ENCODE measurements at regions of chrX and their contacts with region 1.

Region 1: DNA sequence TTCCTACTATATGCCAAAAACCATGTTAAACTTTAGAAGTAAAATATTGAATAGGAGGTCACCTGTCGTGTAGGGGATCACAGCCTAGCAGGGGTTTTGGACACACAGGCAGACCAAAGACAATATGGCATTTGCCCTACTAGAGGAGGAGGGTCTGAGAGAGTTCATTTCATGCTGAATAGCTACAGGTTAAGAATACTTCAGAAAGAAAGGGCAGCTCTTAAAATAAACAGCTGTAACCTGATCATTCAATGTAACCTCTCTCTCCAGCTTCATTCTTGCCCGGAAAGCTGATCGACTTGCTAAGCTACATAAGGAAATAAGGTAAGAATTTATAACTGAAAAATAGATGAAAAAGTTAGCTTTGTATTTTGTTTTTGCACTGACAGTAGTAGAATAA is 79.9 kb downstream of the MAOA start:
- DNase-seq: no peak
- ATAC-seq: no peak
- H3K4me3 ChIP-seq: peak overlapping the region in 1 of 12 donors; percentile 7
- H3K27ac ChIP-seq: no peak overlapping the region
- H3K4me1 ChIP-seq: peaks cover 0 to 4% (median 0%) of the 10 kb centered on the region in 12 donors
- H3K27me3 ChIP-seq: peaks cover 0 to 21% (median 0%) of the 10 kb centered on the region in 9 donors
- CTCF ChIP-seq: no peak
- POLR2A ChIP-seq: no peak

Region 2: DNA sequence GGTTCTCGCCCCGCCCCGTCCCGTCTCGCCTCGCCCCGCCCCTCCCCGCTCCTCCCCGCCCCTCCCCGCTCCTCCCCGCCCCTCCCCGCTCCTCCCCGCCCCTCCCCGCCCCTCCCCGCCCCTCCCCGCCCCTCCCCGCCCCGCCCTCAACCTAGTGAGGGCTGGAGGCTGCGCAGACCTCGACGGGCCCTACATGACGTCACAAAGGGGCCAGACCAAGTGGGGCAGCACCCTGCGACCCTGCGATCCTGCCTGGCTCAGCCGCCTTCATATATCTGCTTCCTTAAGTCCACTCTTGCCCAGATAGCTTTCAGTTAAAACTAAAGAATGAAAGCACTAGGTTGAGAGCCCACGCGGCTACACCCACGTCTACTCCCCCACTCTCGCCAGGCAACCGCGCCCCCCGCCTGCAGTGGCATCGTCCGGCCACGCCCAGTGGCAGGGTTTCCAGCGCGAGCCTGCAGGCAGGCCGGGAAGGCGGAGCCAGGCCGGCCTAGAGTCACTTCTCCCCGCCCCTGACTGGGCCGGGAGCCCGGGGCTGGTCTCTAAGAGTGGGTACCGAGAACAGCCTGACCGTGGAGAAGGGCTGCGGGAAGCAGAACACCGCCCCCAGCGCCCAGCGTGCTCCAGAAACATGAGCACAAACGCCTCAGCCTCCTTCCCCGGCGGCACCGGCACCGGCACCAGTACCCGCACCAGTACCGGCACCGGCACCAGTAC is 81.4 kb before region 1 on chrX:
- intact Hi-C with region 1: loop called in 5 of 10 experiments (anchors 2 to 10 kb)
- DNase-seq: peak; percentile 91 to 95 (median 94)
- ATAC-seq: peak; percentile 94 to 98 (median 97)
- H3K4me3 ChIP-seq: peak overlapping the region; percentile 43 to 98 (median 76)
- H3K27ac ChIP-seq: peak overlapping the region; percentile 81 to 95 (median 88)
- H3K4me1 ChIP-seq: peaks cover 0 to 6% (median 0%) of the 10 kb centered on the region in 12 donors
- H3K27me3 ChIP-seq: peaks cover 0 to 17% (median 0%) of the 10 kb centered on the region in 9 donors
- CTCF ChIP-seq: peak in 10 of 12 donors; percentile 11 to 53 (median 31)
- POLR2A ChIP-seq: peak in 1 of 2 donors; percentile 95

Region 3: GRCh38 chrX:43693602-43694406 is 42.2 kb before region 1 on chrX:
- intact Hi-C with region 1: loop called in 1 of 10 experiments (anchors 5 kb)
- DNase-seq: no peak
- ATAC-seq: peak in 2 of 4 donors; percentile 39 to 44
- H3K4me3 ChIP-seq: no peak overlapping the region
- H3K27ac ChIP-seq: peak overlapping the region in 6 of 12 donors; percentile 17 to 49 (median 32)
- H3K4me1 ChIP-seq: peaks cover 0 to 22% (median 6%) of the 10 kb centered on the region in 12 donors
- H3K27me3 ChIP-seq: peaks cover 0 to 14% (median 0%) of the 10 kb centered on the region in 9 donors
- CTCF ChIP-seq: no peak
- POLR2A ChIP-seq: no peak

Region 4: GRCh38 chrX:43827791-43828190 is 91.8 kb after region 1 on chrX:
- intact Hi-C with region 1: no loop called
- DNase-seq: no peak
- ATAC-seq: no peak
- H3K4me3 ChIP-seq: no peak overlapping the region
- H3K27ac ChIP-seq: no peak overlapping the region
- H3K4me1 ChIP-seq: no peaks in the 10 kb centered on the region
- H3K27me3 ChIP-seq: peaks cover 0 to 22% (median 0%) of the 10 kb centered on the region in 9 donors
- CTCF ChIP-seq: no peak
- POLR2A ChIP-seq: no peak